Endothelial cell of umbilical vein (primary cell): ENCODE measurements at regions of chr22 and their contacts with region 1.

Region 1: DNA sequence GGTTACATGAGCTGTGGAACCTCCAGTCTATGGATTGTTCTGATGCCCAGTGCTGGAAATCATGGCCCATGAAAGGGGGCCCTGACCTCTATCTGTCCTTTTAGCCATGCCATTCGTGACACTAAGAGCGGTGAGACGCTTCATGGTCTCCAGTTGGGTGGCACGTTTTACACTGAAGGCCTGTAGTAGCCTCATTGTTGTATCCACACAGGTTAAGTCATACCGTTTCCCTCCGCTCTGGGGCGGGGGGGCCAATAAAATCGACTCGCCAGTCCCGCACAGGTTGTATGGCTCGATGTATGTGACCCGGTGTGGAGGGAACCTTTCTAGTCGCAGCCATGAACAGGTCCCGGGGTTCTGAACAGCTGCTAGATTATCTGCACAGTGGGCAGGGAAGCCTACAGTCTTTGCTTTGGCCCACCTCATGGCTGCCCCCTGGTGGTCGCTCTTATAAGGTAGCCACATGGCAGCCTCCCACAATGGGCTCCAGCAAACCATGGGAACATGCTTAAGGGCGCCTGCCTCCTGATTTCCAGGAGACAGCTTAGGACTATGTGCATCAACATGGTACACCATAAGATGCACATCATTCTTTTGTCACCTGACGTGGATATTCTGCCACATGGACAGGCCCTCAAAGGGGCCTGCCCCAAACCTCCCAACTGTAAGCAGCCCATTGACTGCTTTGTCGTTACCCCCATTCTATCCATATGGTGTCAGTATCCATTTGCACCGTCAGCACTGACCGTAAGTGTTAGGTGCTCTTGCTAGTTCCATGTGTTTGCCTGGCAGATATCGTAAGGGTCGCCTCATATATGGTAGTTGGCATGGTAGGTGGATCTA is 19.7 kb upstream of the APOL3 start:
- DNase-seq: peak; percentile 71
- H3K4me3 ChIP-seq: no peak overlapping the region
- H3K27ac ChIP-seq: no peak overlapping the region
- H3K4me1 ChIP-seq: no peaks in the 10 kb centered on the region
- H3K27me3 ChIP-seq: no peaks in the 10 kb centered on the region
- CTCF ChIP-seq: peak; percentile 84 to 92
- POLR2A ChIP-seq: no peak

Region 2: GRCh38 chr22:36081023-36081431 is 99.2 kb before region 1 on chr22:
- CTCF ChIA-PET with region 1: no interaction called
- POLR2A ChIA-PET with region 1: no interaction called
- dilution Hi-C with region 1: no loop called
- intact Hi-C with region 1: no loop called
- DNase-seq: no peak
- H3K4me3 ChIP-seq: no peak overlapping the region
- H3K27ac ChIP-seq: no peak overlapping the region
- H3K4me1 ChIP-seq: no peaks in the 10 kb centered on the region
- H3K27me3 ChIP-seq: peaks cover 0 to 5% of the 10 kb centered on the region in 2 experiments
- CTCF ChIP-seq: no peak
- POLR2A ChIP-seq: no peak

Region 3: GRCh38 chr22:36144886-36145541 is 35.2 kb before region 1 on chr22:
- CTCF ChIA-PET with region 1: interaction called, 140 read pairs
- POLR2A ChIA-PET with region 1: interaction called, 4 read pairs
- dilution Hi-C with region 1: no loop called
- intact Hi-C with region 1: loop called (anchors 1 kb)
- DNase-seq: peak; percentile 77
- H3K4me3 ChIP-seq: no peak overlapping the region
- H3K27ac ChIP-seq: no peak overlapping the region
- H3K4me1 ChIP-seq: no peaks in the 10 kb centered on the region
- H3K27me3 ChIP-seq: peaks cover 0 to 2% of the 10 kb centered on the region in 2 experiments
- CTCF ChIP-seq: peak; percentile 80 to 83
- POLR2A ChIP-seq: no peak

Region 4: DNA sequence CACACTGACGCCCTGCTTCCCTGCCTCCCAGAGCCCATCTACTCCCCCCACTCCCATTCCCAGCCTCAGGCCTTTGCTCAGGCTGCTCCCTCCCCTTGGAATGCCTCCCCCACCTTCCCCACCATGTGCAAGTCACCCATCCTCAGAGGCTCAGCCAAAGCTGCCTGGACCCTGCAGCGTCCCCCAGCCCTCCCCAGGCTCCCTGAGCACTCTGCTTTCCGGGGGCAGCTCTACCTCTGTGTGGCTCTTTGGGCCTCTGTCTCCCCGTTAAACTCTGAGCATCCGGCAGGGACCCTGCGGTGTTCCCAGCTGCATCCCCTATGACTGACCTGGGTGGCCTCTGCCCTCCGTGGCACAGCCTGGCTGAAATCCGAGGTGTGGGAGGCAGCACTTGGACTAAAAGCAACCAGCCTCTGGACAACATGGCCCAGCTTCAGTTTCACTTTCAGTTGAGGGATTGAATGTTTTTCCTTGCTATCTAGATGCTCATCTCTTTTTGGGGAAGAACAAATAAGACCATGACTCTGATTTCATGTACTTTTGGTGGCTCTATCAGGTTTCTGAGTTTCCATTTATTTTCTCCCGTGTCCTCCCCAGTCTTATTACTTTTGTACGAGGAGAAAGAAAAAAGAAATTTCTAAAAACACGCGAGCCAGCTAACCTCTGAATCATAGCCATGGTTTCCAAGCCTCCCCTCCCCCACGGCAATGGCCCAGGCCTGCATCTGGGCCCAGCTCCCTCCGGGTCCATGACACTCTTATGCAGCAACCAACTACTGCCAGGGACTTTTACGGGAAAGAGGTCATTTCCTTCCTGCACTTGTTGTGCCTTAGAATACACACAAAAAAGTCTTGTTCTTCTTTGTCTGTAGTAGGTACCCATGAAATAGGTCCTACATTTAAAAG is 23.5 kb before region 1 on chr22:
- CTCF ChIA-PET with region 1: interaction called, 26 read pairs
- POLR2A ChIA-PET with region 1: no interaction called
- dilution Hi-C with region 1: no loop called
- intact Hi-C with region 1: no loop called
- DNase-seq: peak; percentile 98
- H3K4me3 ChIP-seq: peak overlapping the region; percentile 14 to 66 (median 23)
- H3K27ac ChIP-seq: peak overlapping the region; percentile 98
- H3K4me1 ChIP-seq: peaks cover 41% of the 10 kb centered on the region
- H3K27me3 ChIP-seq: no peaks in the 10 kb centered on the region
- CTCF ChIP-seq: no peak
- POLR2A ChIP-seq: peak; percentile 55

Region 5: GRCh38 chr22:36162127-36163034 is 17.9 kb before region 1 on chr22:
- CTCF ChIA-PET with region 1: interaction called, 26 read pairs
- POLR2A ChIA-PET with region 1: no interaction called
- dilution Hi-C with region 1: no loop called
- intact Hi-C with region 1: no loop called
- DNase-seq: no peak
- H3K4me3 ChIP-seq: no peak overlapping the region
- H3K27ac ChIP-seq: no peak overlapping the region
- H3K4me1 ChIP-seq: peaks cover 20% of the 10 kb centered on the region
- H3K27me3 ChIP-seq: peaks cover 3 to 7% of the 10 kb centered on the region in 2 experiments
- CTCF ChIP-seq: no peak
- POLR2A ChIP-seq: no peak

Region 6: GRCh38 chr22:36409911-36410756 is 229.9 kb after region 1 on chr22:
- CTCF ChIA-PET with region 1: no interaction called
- POLR2A ChIA-PET with region 1: no interaction called
- dilution Hi-C with region 1: no loop called
- intact Hi-C with region 1: no loop called
- DNase-seq: peak; percentile 60
- H3K4me3 ChIP-seq: no peak overlapping the region
- H3K27ac ChIP-seq: no peak overlapping the region
- H3K4me1 ChIP-seq: no peaks in the 10 kb centered on the region
- H3K27me3 ChIP-seq: no peaks in the 10 kb centered on the region
- CTCF ChIP-seq: no peak
- POLR2A ChIP-seq: no peak